MCF 10A (cell line): ENCODE measurements at regions of chr13 and their contacts with region 1.

Region 1: GRCh38 chr13:20197361-20197834 is 4.7 kb upstream of the GJB2 start:
- DNase-seq: peak; percentile 59
- H3K4me3 Mint-ChIP-seq: no peak overlapping the region
- H3K27ac Mint-ChIP-seq: no peak overlapping the region
- H3K4me1 Mint-ChIP-seq: peaks cover 24% of the 10 kb centered on the region
- H3K27me3 Mint-ChIP-seq: no peaks in the 10 kb centered on the region
- CTCF ChIP-seq: peak; percentile 67

Region 2: GRCh38 chr13:20353973-20354372 is 156.6 kb after region 1 on chr13:
- CTCF ChIA-PET with region 1: interaction called, 8 read pairs
- POLR2A ChIA-PET with region 1: interaction called, 3 read pairs
- intact Hi-C with region 1: loop called (anchors 2 kb)
- DNase-seq: peak; percentile 72
- H3K4me3 Mint-ChIP-seq: no peak overlapping the region
- H3K27ac Mint-ChIP-seq: no peak overlapping the region
- H3K4me1 Mint-ChIP-seq: peaks cover 44% of the 10 kb centered on the region
- H3K27me3 Mint-ChIP-seq: no peaks in the 10 kb centered on the region
- CTCF ChIP-seq: peak; percentile 28

Region 3: DNA sequence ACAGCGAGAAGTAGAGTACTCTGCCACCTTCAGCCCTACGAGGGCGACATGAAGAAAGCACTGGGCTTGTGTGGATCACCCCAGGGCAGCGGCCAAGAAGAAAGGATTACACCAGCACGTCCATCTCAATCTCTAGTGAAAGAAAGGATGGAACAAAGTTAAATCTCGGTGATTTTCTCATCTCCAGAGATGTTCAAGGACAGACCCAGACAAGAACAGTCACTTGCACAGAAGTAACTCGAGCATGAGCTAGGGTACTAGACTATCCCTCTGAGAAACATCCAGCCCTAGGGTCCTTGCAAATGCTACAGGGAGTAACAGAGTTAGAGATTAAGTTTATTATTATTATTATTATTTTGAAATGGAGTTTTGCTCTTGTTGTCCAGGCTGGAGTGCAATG is 221.6 kb after region 1 on chr13:
- CTCF ChIA-PET with region 1: interaction called, 4 read pairs
- POLR2A ChIA-PET with region 1: interaction called, 7 read pairs
- intact Hi-C with region 1: loop called (anchors 1 kb)
- DNase-seq: no peak
- H3K4me3 Mint-ChIP-seq: no peak overlapping the region
- H3K27ac Mint-ChIP-seq: peak overlapping the region; percentile 91
- H3K4me1 Mint-ChIP-seq: peaks cover 33% of the 10 kb centered on the region
- H3K27me3 Mint-ChIP-seq: no peaks in the 10 kb centered on the region
- CTCF ChIP-seq: no peak

Region 4: GRCh38 chr13:20489185-20489820 is 291.9 kb after region 1 on chr13:
- CTCF ChIA-PET with region 1: interaction called, 21 read pairs
- POLR2A ChIA-PET with region 1: interaction called, 4 read pairs
- intact Hi-C with region 1: loop called (anchors 1 kb)
- DNase-seq: no peak
- H3K4me3 Mint-ChIP-seq: no peak overlapping the region
- H3K27ac Mint-ChIP-seq: no peak overlapping the region
- H3K4me1 Mint-ChIP-seq: peaks cover 13% of the 10 kb centered on the region
- H3K27me3 Mint-ChIP-seq: no peaks in the 10 kb centered on the region
- CTCF ChIP-seq: peak; percentile 28

Region 5: DNA sequence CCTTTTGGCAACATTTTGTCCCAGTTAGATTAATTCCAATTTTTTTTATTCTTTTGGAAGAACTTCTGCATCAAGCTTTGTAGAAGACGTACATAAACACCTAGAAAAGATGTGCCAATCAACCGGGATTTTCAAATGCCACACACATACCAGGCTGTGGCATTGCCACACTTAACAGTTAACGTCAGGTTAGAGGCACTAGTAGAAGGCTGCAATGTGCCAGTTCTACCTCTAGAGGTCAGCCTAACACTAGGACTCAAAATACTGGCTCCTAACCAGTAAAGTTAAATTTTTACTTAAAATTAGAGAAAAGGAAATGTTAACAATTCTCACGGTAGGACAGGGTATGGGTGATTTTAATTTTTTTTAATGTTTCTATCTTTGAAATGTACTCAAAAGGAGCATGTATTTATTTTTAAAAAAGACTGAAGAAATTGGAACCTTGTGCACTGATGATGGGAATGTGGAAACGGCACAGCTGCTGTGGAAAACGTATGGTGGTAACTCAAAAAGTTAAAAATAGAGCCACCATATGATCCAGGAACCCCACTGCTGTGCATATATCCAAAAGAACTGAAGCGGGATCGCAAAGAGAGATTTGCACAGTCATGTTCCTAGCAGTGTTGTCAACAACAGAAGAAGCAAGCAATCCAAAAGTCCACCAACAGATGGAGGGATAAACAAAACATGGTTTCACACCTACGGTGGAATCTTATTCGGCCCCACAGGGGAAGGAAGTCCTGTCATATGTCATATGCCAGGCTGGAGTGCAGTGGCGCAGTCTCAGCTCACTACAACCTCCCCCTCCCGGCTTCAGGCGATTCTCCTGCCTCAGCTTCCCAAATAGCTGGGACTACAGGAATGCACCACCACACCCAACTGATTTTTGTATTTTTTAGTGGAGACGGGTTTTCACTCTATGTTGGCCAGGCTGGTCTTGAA is 298.0 kb after region 1 on chr13:
- CTCF ChIA-PET with region 1: interaction called, 21 read pairs
- POLR2A ChIA-PET with region 1: no interaction called
- intact Hi-C with region 1: loop called (anchors 2 kb)
- DNase-seq: peak; percentile 77
- H3K4me3 Mint-ChIP-seq: no peak overlapping the region
- H3K27ac Mint-ChIP-seq: no peak overlapping the region
- H3K4me1 Mint-ChIP-seq: peaks cover 13% of the 10 kb centered on the region
- H3K27me3 Mint-ChIP-seq: no peaks in the 10 kb centered on the region
- CTCF ChIP-seq: peak; percentile 91

Region 6: GRCh38 chr13:20703780-20704445 is 506.5 kb after region 1 on chr13:
- CTCF ChIA-PET with region 1: interaction called, 3 read pairs
- POLR2A ChIA-PET with region 1: no interaction called
- intact Hi-C with region 1: loop called (anchors 5 kb)
- DNase-seq: peak; percentile 64
- H3K4me3 Mint-ChIP-seq: peak overlapping the region; percentile 77
- H3K27ac Mint-ChIP-seq: no peak overlapping the region
- H3K4me1 Mint-ChIP-seq: peaks cover under 1% of the 10 kb centered on the region
- H3K27me3 Mint-ChIP-seq: no peaks in the 10 kb centered on the region
- CTCF ChIP-seq: peak; percentile 52

Region 7: DNA sequence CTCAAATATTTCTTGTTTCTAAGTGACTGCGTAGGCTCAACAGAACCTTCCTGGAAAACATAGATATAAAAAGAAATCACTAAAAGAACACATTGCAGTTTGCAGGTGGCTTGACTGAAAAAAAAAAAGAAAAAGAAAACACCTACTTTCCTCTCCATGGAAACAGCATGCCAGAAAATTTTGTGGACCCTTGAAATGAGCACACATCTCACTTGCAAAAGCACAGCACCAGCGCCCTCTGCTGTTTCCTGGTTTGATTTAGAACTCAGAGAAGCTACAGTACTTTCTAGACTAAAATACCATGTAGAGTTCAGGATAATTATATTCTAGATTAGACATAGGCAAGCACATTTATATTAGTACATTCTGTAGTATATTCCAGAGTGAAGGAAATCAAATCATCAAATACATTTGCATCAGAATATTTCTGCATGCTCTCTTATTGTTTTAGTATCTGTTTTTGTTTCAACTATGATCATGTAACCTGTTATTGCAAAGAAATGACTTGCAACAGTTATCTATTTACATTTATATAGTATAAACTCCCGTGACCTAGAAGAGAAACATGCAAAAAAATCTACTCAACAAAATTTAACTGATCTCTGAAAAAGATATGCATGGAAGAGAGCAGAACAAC is 727.5 kb after region 1 on chr13:
- CTCF ChIA-PET with region 1: interaction called, 7 read pairs
- POLR2A ChIA-PET with region 1: no interaction called
- intact Hi-C with region 1: loop called (anchors 5 kb)
- DNase-seq: peak; percentile 74
- H3K4me3 Mint-ChIP-seq: no peak overlapping the region
- H3K27ac Mint-ChIP-seq: no peak overlapping the region
- H3K4me1 Mint-ChIP-seq: no peaks in the 10 kb centered on the region
- H3K27me3 Mint-ChIP-seq: no peaks in the 10 kb centered on the region
- CTCF ChIP-seq: peak; percentile 76